ENCODE measurements at regions of chr2 and their contacts with region 1.

Region 1: DNA sequence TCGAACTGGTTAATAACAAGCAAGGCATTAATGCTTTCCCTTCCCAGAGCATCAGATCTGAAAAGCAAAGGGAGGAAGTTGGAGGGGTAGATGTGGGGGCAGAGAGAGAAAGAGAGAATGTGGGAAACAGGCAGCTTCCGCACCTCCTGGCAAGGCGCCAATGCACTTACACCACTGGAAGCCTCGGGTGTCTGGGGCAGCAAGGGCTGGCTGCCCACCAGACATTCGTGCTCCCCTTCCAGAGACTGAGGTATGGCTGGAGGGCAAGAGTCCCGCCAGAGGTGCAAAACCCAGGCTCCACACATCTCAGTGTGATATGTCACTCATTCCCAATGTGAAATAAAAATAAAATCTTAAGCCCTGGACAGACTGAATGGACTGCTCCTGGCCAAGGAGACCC is 46.4 kb downstream of the TEX51 start:
- DNase-seq: no peak
- H3K4me3 ChIP-seq: no peak overlapping the region
- H3K27ac ChIP-seq: no peak overlapping the region
- H3K4me1 ChIP-seq: no peaks in the 10 kb centered on the region
- H3K27me3 ChIP-seq: no peaks in the 10 kb centered on the region
- CTCF ChIP-seq: no peak
- POLR2A ChIP-seq: no peak

Region 2: DNA sequence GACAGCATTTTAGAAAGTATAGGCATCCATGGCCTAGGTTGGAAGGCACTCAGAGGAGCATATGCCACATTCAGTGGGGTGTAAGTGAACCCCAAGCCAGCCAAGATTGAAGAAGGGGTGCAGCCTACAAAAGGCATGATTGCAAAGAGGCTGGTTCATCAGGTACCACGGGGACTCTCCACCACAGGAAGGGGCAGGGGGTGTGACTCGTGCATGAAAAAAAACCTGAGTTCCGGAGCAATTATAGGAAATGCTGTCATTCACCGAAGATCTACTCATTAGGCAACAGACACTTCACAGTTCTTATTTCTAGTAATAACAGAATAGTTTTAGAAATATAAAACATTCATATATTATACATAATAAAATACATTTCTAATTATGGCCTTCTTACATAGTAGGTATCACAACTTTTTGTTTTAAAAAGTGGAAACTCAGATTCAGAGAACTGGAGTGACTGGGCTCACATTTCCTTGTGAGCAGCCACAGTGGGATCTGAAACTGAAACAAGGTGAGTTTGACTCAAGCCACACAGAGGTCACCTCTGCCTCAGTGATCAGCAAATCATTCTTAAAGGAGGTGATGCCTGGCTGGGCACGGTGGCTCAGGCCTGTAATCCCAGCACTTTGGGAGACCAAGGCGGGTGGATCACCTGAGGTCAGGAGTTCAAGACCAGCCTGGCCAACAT is 477.6 kb before region 1 on chr2:
- intact Hi-C with region 1: no loop called
- DNase-seq: no peak
- H3K4me3 ChIP-seq: no peak overlapping the region
- H3K27ac ChIP-seq: no peak overlapping the region
- H3K4me1 ChIP-seq: no peaks in the 10 kb centered on the region
- H3K27me3 ChIP-seq: no peaks in the 10 kb centered on the region
- CTCF ChIP-seq: no peak
- POLR2A ChIP-seq: no peak

Region 3: GRCh38 chr2:127859712-127860085 is 914.6 kb after region 1 on chr2:
- intact Hi-C with region 1: loop called (anchors 5 kb)
- DNase-seq: no peak
- H3K4me3 ChIP-seq: no peak overlapping the region
- H3K27ac ChIP-seq: no peak overlapping the region
- H3K4me1 ChIP-seq: peaks cover 3 to 15% of the 10 kb centered on the region in 2 donors
- H3K27me3 ChIP-seq: no peaks in the 10 kb centered on the region
- CTCF ChIP-seq: no peak
- POLR2A ChIP-seq: no peak